ENCODE measurements at regions of chr18 and their contacts with region 1.

Region 1: DNA sequence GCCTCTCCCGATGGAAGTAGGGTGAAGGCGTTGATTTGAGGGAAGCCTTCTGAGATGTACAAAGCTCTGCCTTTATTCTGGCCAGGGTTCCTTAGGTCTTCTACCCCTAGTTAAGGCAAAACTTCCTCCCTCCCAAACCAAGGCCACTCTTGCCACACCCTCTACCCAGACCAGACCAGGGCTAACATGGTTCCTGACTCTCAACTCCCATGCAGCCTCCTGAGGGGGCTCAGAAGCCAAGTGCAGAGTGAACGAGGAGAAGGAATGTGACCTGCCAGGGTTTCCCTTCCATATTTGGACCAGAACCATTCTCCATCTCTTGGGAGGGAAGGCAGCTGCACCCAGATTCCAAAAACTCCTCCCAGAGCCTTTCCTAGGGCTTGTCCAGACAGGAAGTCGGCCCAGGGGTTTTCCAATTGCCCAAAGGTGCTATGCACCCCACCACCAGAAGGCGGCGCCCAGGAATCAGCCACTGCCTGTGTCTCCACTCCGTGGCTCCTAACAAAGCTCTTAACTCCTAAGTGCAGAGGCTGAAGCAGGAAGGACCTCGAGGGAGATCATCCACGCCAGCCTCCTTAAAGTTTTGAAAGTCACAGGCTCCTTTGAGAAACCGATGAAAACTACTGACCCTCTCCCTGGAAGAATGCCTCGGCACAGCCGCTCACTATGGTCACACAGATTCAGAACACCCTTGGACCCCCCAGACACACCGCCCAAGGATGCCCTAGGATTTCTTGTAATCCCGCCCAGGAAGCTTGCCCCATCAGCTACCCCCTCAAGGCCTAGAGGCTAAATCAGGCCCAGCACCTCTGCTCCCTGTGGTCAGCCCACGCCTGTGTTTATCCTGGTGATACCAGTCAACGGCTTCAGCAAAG is 157.8 kb downstream of the SMAD2 start:
- DNase-seq: no peak
- H3K4me3 ChIP-seq: no peak overlapping the region
- H3K27ac ChIP-seq: no peak overlapping the region
- H3K27me3 ChIP-seq: peaks cover 0 to 2% (median 0%) of the 10 kb centered on the region in 45 donors
- CTCF ChIP-seq: peak in 52 of 56 donors; percentile 23 to 68 (median 49)

Region 2: DNA sequence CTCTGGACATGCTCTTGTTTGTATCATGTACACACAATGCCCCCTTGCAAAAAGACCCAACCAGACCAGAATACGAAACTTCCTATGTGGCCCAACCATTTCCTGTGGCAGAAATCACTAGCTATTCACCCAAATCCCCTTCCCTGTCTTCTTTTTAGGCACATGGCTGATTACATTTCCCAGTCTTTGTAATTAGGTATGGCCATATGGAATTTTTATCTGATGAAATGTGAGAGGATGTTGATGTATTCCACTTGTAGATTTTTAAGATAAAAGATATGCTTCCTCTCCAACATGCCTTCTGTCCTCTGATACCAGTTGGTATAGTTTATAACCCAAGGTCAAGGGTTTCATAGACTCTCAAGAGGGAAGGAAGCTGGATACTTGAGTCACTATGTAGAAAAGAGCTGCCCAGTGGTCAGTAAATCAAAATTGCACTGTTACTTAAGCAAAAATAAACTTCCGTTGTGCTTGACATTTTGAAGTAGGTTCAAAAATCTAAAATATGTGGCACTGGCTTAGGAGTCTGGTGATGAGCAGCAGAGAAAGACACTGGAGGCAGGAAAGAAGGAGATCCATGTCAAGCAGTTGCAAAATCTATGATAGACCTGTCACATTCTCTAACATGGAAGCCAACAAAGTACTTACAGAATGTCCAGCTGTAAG is 139.5 kb before region 1 on chr18:
- intact Hi-C with region 1: no loop called
- DNase-seq: no peak
- H3K4me3 ChIP-seq: no peak overlapping the region
- H3K27ac ChIP-seq: no peak overlapping the region
- H3K27me3 ChIP-seq: peaks cover 0 to 25% (median 3%) of the 10 kb centered on the region in 45 donors
- CTCF ChIP-seq: no peak

Region 3: GRCh38 chr18:47883771-47884413 is 111.3 kb after region 1 on chr18:
- intact Hi-C with region 1: no loop called
- DNase-seq: no peak
- H3K4me3 ChIP-seq: no peak overlapping the region
- H3K27ac ChIP-seq: no peak overlapping the region
- H3K27me3 ChIP-seq: no peaks in the 10 kb centered on the region
- CTCF ChIP-seq: no peak

Region 4: GRCh38 chr18:48022531-48023329 is 250.1 kb after region 1 on chr18:
- intact Hi-C with region 1: loop called (anchors 2 to 5 kb)
- DNase-seq: no peak
- H3K4me3 ChIP-seq: peak overlapping the region in 1 of 59 donors; percentile 25
- H3K27ac ChIP-seq: no peak overlapping the region
- H3K27me3 ChIP-seq: peaks cover 0 to 8% (median 0%) of the 10 kb centered on the region in 45 donors
- CTCF ChIP-seq: peak; percentile 36 to 86 (median 70)

Measured in dorsolateral prefrontal cortex (tissue), 120 donors.